Calu3 (cell line): ENCODE measurements at regions of chr1 and their contacts with region 1.

Region 1: DNA sequence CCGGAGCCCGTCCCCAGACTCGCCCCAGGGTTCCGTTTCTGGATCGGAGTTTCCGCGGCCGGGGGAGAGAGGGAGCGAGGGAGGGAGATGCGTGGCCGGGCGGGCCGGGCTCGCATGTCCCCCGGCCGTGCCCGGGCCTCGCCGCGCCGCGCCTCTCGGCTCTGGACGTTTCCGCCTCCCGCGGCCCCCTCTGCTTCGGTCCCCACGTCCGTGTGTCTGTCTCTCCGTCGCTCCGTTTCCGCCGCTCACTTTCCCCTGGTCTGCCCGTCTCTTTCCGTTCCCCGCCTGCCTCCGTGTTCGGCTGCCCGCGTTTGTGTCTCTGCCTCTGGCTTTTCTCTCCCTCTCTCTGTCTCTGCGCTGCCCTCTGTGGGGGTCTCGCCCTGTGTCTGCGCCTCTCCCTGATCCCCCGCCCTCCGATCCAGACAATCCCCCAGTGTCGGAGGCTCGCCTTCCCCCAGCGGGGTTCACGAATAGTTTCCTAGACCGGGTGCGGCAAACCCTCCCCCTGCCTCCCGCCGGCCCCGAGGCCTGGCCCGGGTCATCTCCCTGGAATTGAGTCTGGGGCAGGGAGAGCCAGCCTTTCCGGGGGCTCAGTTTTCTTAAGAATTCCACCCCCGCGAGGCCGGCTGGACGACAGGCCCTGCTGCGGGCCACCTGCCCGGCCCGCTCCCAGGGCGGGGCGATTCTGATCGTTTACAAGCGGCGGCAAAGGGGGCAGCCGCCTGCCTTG is 735 bp downstream of the NBL1 start:
- DNase-seq: no peak
- H3K4me3 Mint-ChIP-seq: peak overlapping the region; percentile 82
- H3K27ac Mint-ChIP-seq: peak overlapping the region; percentile 55
- H3K4me1 Mint-ChIP-seq: peaks cover 49% of the 10 kb centered on the region
- H3K27me3 Mint-ChIP-seq: no peaks in the 10 kb centered on the region
- CTCF ChIP-seq: no peak

Region 2: GRCh38 chr1:19485362-19486187 is 159.3 kb before region 1 on chr1 and contains the start of gene CAPZB:
- CTCF ChIA-PET with region 1: no interaction called
- intact Hi-C with region 1: loop called (anchors 5 kb)
- DNase-seq: peak; percentile 92
- H3K4me3 Mint-ChIP-seq: peak within 1 kb of the TSS; percentile 93
- H3K27ac Mint-ChIP-seq: peak within 1 kb of the TSS; percentile 91
- H3K4me1 Mint-ChIP-seq: peaks cover 33% of the 10 kb centered on the region
- H3K27me3 Mint-ChIP-seq: no peaks in the 10 kb centered on the region
- CTCF ChIP-seq: no peak
- total RNA-seq, gene CAPZB: 198 and 207 TPM in 2 replicates